CD14-positive monocyte (primary cell): ENCODE measurements at regions of chr13 and their contacts with region 1.

Region 1: DNA sequence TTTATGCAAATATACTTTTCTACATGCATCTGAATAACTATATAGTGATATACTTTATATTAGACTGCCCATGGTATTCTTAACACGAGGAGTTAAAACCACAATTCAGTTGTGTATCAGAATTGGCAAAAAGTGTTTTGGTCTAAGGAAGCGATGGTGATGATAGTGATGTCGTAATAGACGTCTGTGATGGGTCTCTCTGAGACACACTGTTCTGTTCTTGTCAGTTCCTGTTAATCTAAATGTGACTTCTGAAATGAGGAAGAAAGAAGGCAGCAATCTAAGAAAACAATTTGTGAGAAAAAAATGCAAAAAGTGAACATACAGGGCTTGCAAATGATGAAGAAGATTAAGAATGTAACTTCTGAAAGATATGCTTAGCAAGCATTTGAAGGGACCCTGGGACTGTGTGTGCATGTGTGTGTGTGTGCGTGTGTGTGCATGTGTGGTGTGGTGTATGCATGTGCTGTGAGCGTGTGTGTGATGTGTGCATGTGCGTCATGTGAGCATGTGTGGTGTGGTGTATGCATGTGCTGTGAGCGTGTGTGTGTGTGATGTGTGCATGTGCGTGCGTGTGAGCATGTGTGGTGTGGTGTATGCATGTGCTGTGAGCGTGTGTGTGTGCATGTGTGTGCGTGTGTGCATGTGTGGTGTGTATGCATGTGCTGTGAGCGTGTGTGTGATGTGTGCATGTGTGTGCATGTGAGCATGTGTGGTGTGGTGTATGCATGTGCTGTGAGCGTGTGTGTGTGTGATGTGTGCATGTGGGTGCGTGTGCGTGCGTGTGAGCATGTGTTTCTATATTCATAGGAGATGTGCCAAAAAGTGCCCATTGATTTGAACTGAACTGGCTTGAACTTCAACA is 131.8 kb downstream of the IRS2 start:
- DNase-seq: peak; percentile 88 to 98 (median 93)
- H3K4me3 ChIP-seq: peak overlapping the region in 1 of 3 experiments; percentile 63
- H3K4me3 Mint-ChIP-seq: peak overlapping the region; percentile 21 to 82
- H3K27ac ChIP-seq: peak overlapping the region; percentile 87 to 91
- H3K27ac Mint-ChIP-seq: peak overlapping the region; percentile 93 to 100 (median 98)
- H3K4me1 ChIP-seq: peaks cover 68 to 79% of the 10 kb centered on the region in 2 donors
- H3K4me1 Mint-ChIP-seq: peaks cover 69% of the 10 kb centered on the region
- H3K27me3 ChIP-seq: no peaks in the 10 kb centered on the region
- H3K27me3 Mint-ChIP-seq: peaks cover 0 to 2% (median 2%) of the 10 kb centered on the region in 3 donors
- CTCF ChIP-seq: no peak

Region 2: GRCh38 chr13:109383670-109384069 is 270.9 kb before region 1 on chr13:
- intact Hi-C with region 1: loop called in 1 of 2 experiments (anchors 10 kb)
- DNase-seq: peak in 2 of 3 donors; percentile 51 to 68
- H3K4me3 ChIP-seq: no peak overlapping the region
- H3K4me3 Mint-ChIP-seq: no peak overlapping the region
- H3K27ac ChIP-seq: peak overlapping the region in 1 of 2 donors; percentile 51
- H3K27ac Mint-ChIP-seq: peak overlapping the region; percentile 11 to 82 (median 62)
- H3K4me1 ChIP-seq: peaks cover 55 to 65% of the 10 kb centered on the region in 2 donors
- H3K4me1 Mint-ChIP-seq: peaks cover 66% of the 10 kb centered on the region
- H3K27me3 ChIP-seq: no peaks in the 10 kb centered on the region
- H3K27me3 Mint-ChIP-seq: peaks cover 0 to 5% (median 0%) of the 10 kb centered on the region in 3 donors
- CTCF ChIP-seq: no peak

Region 3: GRCh38 chr13:109606520-109606919 is 48.1 kb before region 1 on chr13:
- intact Hi-C with region 1: no loop called
- DNase-seq: no peak
- H3K4me3 ChIP-seq: no peak overlapping the region
- H3K4me3 Mint-ChIP-seq: no peak overlapping the region
- H3K27ac ChIP-seq: no peak overlapping the region
- H3K27ac Mint-ChIP-seq: peak overlapping the region in 1 of 7 donors; percentile 60
- H3K4me1 ChIP-seq: peaks cover 0 to 6% of the 10 kb centered on the region in 2 donors
- H3K4me1 Mint-ChIP-seq: peaks cover 4% of the 10 kb centered on the region
- H3K27me3 ChIP-seq: no peaks in the 10 kb centered on the region
- H3K27me3 Mint-ChIP-seq: peaks cover 0 to 3% (median 2%) of the 10 kb centered on the region in 3 donors
- CTCF ChIP-seq: no peak

Region 4: DNA sequence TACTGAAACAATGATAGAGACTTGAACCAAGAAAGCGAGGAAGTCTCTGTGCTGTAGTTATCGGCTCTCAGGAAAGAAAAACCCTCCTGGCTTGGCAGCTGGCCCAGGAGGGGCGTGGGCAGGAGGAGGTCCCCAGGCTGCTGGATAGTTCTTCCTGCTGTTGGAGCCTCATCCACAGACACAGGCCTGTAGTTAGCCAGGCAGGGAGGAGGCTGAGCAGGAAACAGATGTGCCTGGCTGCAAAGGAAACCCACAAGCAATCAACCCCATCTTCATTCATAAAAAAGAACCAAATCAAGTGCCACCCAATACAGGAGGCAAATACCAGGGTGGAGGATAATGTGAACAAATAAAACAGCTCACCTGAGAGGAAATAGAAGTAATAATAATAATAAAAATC is 45.6 kb after region 1 on chr13:
- intact Hi-C with region 1: loop called (anchors 5 kb)
- DNase-seq: no peak
- H3K4me3 ChIP-seq: no peak overlapping the region
- H3K4me3 Mint-ChIP-seq: no peak overlapping the region
- H3K27ac ChIP-seq: peak overlapping the region; percentile 11 to 39
- H3K27ac Mint-ChIP-seq: peak overlapping the region in 5 of 7 donors; percentile 47 to 80 (median 64)
- H3K4me1 ChIP-seq: peaks cover 47 to 48% of the 10 kb centered on the region in 2 donors
- H3K4me1 Mint-ChIP-seq: peaks cover 57% of the 10 kb centered on the region
- H3K27me3 ChIP-seq: no peaks in the 10 kb centered on the region
- H3K27me3 Mint-ChIP-seq: peaks cover 0 to 5% (median 1%) of the 10 kb centered on the region in 3 donors
- CTCF ChIP-seq: no peak

Region 5: GRCh38 chr13:109712124-109712727 is 57.7 kb after region 1 on chr13:
- intact Hi-C with region 1: no loop called
- DNase-seq: peak in 1 of 3 donors; percentile 72
- H3K4me3 ChIP-seq: no peak overlapping the region
- H3K4me3 Mint-ChIP-seq: no peak overlapping the region
- H3K27ac ChIP-seq: no peak overlapping the region
- H3K27ac Mint-ChIP-seq: peak overlapping the region in 2 of 7 donors; percentile 50 to 54
- H3K4me1 ChIP-seq: peaks cover 14 to 19% of the 10 kb centered on the region in 2 donors
- H3K4me1 Mint-ChIP-seq: peaks cover 39% of the 10 kb centered on the region
- H3K27me3 ChIP-seq: no peaks in the 10 kb centered on the region
- H3K27me3 Mint-ChIP-seq: no peaks in the 10 kb centered on the region
- CTCF ChIP-seq: no peak

Region 6: DNA sequence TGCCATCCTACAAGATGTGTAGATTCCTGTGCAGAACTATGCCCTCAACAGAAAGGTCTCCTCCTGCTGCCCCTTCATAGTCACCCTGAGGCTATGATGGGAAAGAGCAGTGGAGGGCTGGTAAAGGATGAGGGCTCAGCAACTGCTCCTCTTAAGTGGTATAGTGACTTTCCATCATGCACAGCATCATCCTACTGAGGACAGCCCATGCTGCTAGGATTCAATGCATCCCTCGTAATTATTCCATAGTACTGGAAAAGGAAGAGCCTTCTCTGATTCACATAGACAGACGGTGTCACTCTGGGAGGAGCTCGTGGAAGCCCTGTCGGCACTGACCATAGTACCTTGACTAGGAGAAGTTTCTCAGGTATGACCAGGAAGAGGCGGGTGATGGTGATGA is 179.4 kb after region 1 on chr13:
- intact Hi-C with region 1: no loop called
- DNase-seq: no peak
- H3K4me3 ChIP-seq: no peak overlapping the region
- H3K4me3 Mint-ChIP-seq: no peak overlapping the region
- H3K27ac ChIP-seq: no peak overlapping the region
- H3K27ac Mint-ChIP-seq: no peak overlapping the region
- H3K4me1 ChIP-seq: no peaks in the 10 kb centered on the region
- H3K4me1 Mint-ChIP-seq: no peaks in the 10 kb centered on the region
- H3K27me3 ChIP-seq: no peaks in the 10 kb centered on the region
- H3K27me3 Mint-ChIP-seq: peaks cover 0 to 8% (median 3%) of the 10 kb centered on the region in 3 donors
- CTCF ChIP-seq: no peak